ENCODE measurements at regions of chrX and their contacts with region 1.

Region 1: DNA sequence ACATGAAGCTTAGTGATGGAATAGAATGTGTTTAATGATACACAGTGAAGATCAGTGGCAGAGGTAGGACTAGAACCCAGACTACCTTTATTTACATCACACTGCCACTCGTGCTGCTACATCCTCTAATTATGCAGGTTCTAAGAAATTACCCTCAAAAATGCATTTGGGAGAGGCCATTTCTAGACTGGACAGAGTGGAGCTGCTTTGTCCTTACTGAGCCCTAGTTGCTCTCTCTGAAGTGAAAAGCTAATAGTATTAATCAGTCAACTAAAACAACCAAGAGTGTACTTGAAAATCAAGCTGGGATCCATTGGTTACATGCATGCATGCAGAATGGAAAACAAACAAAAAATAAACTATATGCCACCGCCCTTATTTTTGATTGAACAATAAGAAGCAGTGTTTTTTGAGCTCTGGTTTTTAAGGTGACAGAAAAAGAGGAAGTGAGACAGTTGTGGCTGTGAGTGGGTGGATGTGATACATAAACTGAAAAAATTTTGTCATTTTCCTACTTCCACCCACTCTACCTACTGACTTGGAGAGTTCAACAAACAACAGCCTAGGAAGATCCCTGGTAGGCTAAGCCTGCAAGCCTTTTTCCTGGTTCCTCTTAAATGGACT is 6.8 kb upstream of the VSIG4 start:
- DNase-seq: peak; percentile 68
- ATAC-seq: peak; percentile 82
- H3K4me3 ChIP-seq: peak overlapping the region in 1 of 5 experiments; percentile 12
- H3K4me3 Mint-ChIP-seq: peak overlapping the region; percentile 53
- H3K27ac ChIP-seq: peak overlapping the region; percentile 62 to 75
- H3K27ac Mint-ChIP-seq: peak overlapping the region; percentile 94
- H3K4me1 ChIP-seq: peaks cover 41 to 43% of the 10 kb centered on the region in 2 donors
- H3K4me1 Mint-ChIP-seq: peaks cover 52% of the 10 kb centered on the region
- H3K27me3 ChIP-seq: no peaks in the 10 kb centered on the region
- H3K27me3 Mint-ChIP-seq: no peaks in the 10 kb centered on the region
- CTCF ChIP-seq: no peak

Region 2: GRCh38 chrX:65697915-65698796 is 348.6 kb before region 1 on chrX:
- CTCF ChIA-PET with region 1: no interaction called
- POLR2A ChIA-PET with region 1: no interaction called
- intact Hi-C with region 1: loop called (anchors 1 kb)
- DNase-seq: peak; percentile 83
- ATAC-seq: peak; percentile 63
- H3K4me3 ChIP-seq: peak overlapping the region; percentile 13 to 38 (median 21)
- H3K4me3 Mint-ChIP-seq: peak overlapping the region; percentile 80
- H3K27ac ChIP-seq: peak overlapping the region; percentile 83 to 90
- H3K27ac Mint-ChIP-seq: peak overlapping the region; percentile 92
- H3K4me1 ChIP-seq: peaks cover 86 to 96% of the 10 kb centered on the region in 2 donors
- H3K4me1 Mint-ChIP-seq: peaks cover 83% of the 10 kb centered on the region
- H3K27me3 ChIP-seq: no peaks in the 10 kb centered on the region
- H3K27me3 Mint-ChIP-seq: no peaks in the 10 kb centered on the region
- CTCF ChIP-seq: no peak

Region 3: GRCh38 chrX:65871661-65872311 is 174.9 kb before region 1 on chrX:
- CTCF ChIA-PET with region 1: no interaction called
- POLR2A ChIA-PET with region 1: interaction called, 10 read pairs
- intact Hi-C with region 1: no loop called
- DNase-seq: peak; percentile 29
- ATAC-seq: peak; percentile 31
- H3K4me3 ChIP-seq: no peak overlapping the region
- H3K4me3 Mint-ChIP-seq: no peak overlapping the region
- H3K27ac ChIP-seq: no peak overlapping the region
- H3K27ac Mint-ChIP-seq: no peak overlapping the region
- H3K4me1 ChIP-seq: peaks cover 0 to 11% of the 10 kb centered on the region in 2 donors
- H3K4me1 Mint-ChIP-seq: peaks cover 17% of the 10 kb centered on the region
- H3K27me3 ChIP-seq: no peaks in the 10 kb centered on the region
- H3K27me3 Mint-ChIP-seq: no peaks in the 10 kb centered on the region
- CTCF ChIP-seq: no peak

Region 4: DNA sequence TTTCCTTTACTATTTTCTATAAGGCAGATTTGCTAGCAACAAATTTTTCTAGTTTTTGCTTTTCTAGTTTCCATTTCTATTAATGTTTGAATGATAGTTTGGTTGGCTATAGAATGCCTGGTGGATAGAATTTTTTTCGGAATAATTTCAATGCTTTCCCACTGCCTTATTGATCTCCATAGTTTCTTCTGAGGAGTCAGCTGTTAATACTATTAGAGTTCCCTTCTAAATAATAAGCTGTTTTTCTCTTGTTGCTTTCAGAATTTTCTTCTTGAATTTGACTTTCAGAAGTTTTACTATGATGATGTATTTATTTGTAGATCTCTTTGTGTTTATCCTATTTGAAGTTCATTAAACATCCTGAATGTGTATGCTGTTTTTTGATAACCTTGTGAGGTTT is 98.6 kb before region 1 on chrX:
- CTCF ChIA-PET with region 1: no interaction called
- POLR2A ChIA-PET with region 1: no interaction called
- intact Hi-C with region 1: no loop called
- DNase-seq: no peak
- ATAC-seq: no peak
- H3K4me3 ChIP-seq: no peak overlapping the region
- H3K4me3 Mint-ChIP-seq: no peak overlapping the region
- H3K27ac ChIP-seq: no peak overlapping the region
- H3K27ac Mint-ChIP-seq: no peak overlapping the region
- H3K4me1 ChIP-seq: no peaks in the 10 kb centered on the region
- H3K4me1 Mint-ChIP-seq: no peaks in the 10 kb centered on the region
- H3K27me3 ChIP-seq: no peaks in the 10 kb centered on the region
- H3K27me3 Mint-ChIP-seq: no peaks in the 10 kb centered on the region
- CTCF ChIP-seq: no peak

Region 5: DNA sequence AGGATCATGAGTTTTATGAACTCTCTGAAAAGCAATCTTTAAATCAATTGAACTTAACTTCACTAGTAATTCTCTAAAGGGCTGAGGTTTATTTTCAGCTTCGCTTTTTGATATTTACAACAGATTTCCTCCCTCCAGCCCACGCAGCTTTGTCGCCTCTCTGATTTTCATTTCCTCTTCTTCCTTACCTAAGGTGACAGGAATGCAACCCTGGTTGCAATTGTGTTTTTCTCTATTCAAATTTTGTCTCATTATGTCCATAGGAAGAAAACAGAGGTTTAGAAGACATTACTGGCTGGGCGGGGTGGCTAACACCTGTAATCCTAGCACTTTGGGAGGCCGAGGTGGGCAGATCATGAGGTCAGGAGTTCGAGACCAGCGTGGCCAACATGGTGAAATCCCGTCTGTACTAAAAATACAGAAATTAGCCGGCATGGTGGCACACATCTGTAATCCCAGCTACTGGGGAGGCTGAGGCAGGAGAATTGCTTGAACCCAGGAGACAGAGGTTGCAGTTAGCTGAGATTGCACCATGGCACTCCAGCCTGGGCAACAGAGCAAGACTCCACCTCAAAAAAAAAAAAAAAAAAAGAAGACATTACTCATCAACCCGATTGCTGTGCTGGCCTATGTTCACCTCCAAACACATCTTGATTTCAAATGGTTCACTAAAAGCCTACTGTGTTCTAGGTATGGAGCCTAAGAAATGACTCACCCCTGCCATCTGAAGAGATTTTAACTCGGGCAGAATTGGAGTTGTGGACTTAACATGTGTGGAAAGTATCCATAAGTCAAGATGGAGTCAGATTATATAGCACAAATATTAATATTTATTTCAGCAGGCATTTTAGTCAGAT is 43.7 kb before region 1 on chrX:
- CTCF ChIA-PET with region 1: interaction called, 3 read pairs
- POLR2A ChIA-PET with region 1: interaction called, 3 read pairs
- intact Hi-C with region 1: loop called (anchors 10 kb)
- DNase-seq: peak; percentile 49
- ATAC-seq: peak; percentile 72
- H3K4me3 ChIP-seq: no peak overlapping the region
- H3K4me3 Mint-ChIP-seq: peak overlapping the region; percentile 74
- H3K27ac ChIP-seq: peak overlapping the region; percentile 44 to 70
- H3K27ac Mint-ChIP-seq: peak overlapping the region; percentile 90
- H3K4me1 ChIP-seq: peaks cover 78 to 86% of the 10 kb centered on the region in 2 donors
- H3K4me1 Mint-ChIP-seq: peaks cover 88% of the 10 kb centered on the region
- H3K27me3 ChIP-seq: no peaks in the 10 kb centered on the region
- H3K27me3 Mint-ChIP-seq: no peaks in the 10 kb centered on the region
- CTCF ChIP-seq: no peak

Region 6: DNA sequence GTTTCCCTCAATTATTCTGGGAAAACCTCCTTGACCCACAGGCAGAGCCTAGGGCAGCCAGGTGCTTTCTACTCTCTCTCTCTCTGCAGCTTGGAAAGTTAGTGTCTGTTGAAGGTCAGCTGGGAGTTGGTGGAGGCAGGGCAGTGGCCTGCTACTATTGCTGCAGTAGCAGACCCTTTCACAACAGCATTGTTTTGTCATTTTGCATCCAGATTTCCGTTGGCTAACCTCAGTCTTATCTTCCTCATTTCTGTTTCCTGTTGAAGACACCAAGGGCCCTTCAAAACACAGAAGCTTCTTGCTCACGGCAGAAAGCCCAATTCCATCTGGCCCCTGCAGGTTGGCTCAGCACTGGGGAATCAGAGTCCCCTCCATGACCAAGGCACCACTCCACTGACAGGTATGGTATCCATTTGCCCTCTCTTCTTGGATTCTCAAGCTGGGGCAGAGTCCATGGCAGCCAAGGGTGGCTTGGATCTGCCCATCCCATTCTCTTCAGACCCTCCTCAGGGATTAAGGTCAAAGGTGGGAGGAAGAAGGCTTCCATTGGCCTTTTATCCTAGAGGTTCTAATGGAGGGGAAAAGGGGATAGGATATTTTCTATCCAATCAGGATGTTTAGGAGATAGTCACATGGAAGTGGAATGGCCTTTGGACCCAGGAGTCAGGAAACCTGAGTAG is 31.4 kb before region 1 on chrX:
- CTCF ChIA-PET with region 1: interaction called, 12 read pairs
- POLR2A ChIA-PET with region 1: interaction called, 5 read pairs
- intact Hi-C with region 1: loop called (anchors 2 kb)
- DNase-seq: peak; percentile 74
- ATAC-seq: peak; percentile 69
- H3K4me3 ChIP-seq: peak overlapping the region; percentile 64 to 89 (median 75)
- H3K4me3 Mint-ChIP-seq: peak overlapping the region; percentile 75
- H3K27ac ChIP-seq: peak overlapping the region; percentile 72 to 80
- H3K27ac Mint-ChIP-seq: peak overlapping the region; percentile 90
- H3K4me1 ChIP-seq: peaks cover 83 to 99% of the 10 kb centered on the region in 2 donors
- H3K4me1 Mint-ChIP-seq: peaks cover 80% of the 10 kb centered on the region
- H3K27me3 ChIP-seq: no peaks in the 10 kb centered on the region
- H3K27me3 Mint-ChIP-seq: no peaks in the 10 kb centered on the region
- CTCF ChIP-seq: no peak

Region 7: GRCh38 chrX:66022632-66023384 is 23.9 kb before region 1 on chrX:
- CTCF ChIA-PET with region 1: interaction called, 12 read pairs
- POLR2A ChIA-PET with region 1: interaction called, 5 read pairs
- intact Hi-C with region 1: no loop called
- DNase-seq: no peak
- ATAC-seq: no peak
- H3K4me3 ChIP-seq: no peak overlapping the region
- H3K4me3 Mint-ChIP-seq: peak overlapping the region; percentile 26
- H3K27ac ChIP-seq: peak overlapping the region; percentile 69 to 80
- H3K27ac Mint-ChIP-seq: peak overlapping the region; percentile 87
- H3K4me1 ChIP-seq: peaks cover 72% of the 10 kb centered on the region in 2 donors
- H3K4me1 Mint-ChIP-seq: peaks cover 72% of the 10 kb centered on the region
- H3K27me3 ChIP-seq: no peaks in the 10 kb centered on the region
- H3K27me3 Mint-ChIP-seq: no peaks in the 10 kb centered on the region
- CTCF ChIP-seq: no peak

Measured in B cell (primary cell).